K562 (cell line): ENCODE measurements at regions of chr1 and their contacts with region 1.

Region 1: DNA sequence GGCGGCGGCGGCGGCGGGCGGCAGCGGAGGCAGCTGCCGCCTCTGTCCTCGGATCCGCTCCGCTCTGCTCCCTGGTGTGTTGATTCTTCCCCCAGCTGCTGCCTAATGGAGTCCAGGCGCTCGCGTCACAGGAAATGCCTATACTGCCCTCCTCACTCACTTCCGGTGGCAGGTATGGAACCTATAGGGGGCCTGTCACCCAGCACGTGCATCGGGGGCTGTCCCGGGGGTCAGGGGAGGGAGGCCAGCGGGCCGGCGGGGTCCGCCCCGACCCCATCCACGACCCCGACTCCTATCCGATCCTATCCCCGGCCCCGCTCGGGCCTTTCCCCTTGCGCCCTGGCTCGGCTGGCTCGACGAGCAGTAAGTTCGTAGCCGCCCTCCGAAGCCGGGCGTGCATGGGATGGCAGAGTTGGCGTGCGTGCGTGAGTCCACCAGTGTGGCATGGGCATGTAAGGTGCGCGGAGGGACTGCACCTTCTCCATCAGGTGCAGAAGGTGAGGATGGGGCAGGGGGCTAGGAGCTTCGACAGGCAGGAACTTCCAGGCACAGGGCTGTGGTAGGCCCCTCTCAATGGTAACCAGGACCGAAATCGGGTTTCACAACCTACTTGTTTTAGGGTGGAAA is at the start of gene WDR26:
- DNase-seq: peak; percentile 84 to 95 (median 88)
- ATAC-seq: peak; percentile 78
- H3K4me3 ChIP-seq: peak within 1 kb of the TSS; percentile 77
- H3K27ac ChIP-seq: peak within 1 kb of the TSS; percentile 96
- H3K4me1 ChIP-seq: peaks cover 12 to 29% of the 10 kb centered on the region in 2 experiments
- H3K27me3 ChIP-seq: no peaks in the 10 kb centered on the region
- CTCF ChIP-seq: peak; percentile 22 to 35 (median 30); a peak in 3 of 6 replicates
- EP300 ChIP-seq: peak; percentile 39; the same call in 1 of the 2 replicates
- POLR2A ChIP-seq: peak; percentile 86
- RAD21 ChIP-seq: no peak
- polyA plus RNA-seq, gene WDR26: 11.5 to 14.3 TPM

Region 2: GRCh38 chr1:224356685-224357625 is 77.8 kb before region 1 on chr1 and contains the start of gene CNIH4:
- CTCF ChIA-PET with region 1: no interaction called
- POLR2A ChIA-PET with region 1: no interaction called
- in situ Hi-C with region 1: no loop called
- intact Hi-C with region 1: loop called (anchors 1 kb)
- DNase-seq: peak; percentile 94 to 97 (median 96)
- ATAC-seq: peak; percentile 95
- H3K4me3 ChIP-seq: peak within 1 kb of the TSS; percentile 79
- H3K27ac ChIP-seq: peak within 1 kb of the TSS; percentile 46
- H3K4me1 ChIP-seq: peaks cover 12 to 16% of the 10 kb centered on the region in 2 experiments
- H3K27me3 ChIP-seq: no peaks in the 10 kb centered on the region
- CTCF ChIP-seq: no peak; a peak in 1 of 6 replicates
- EP300 ChIP-seq: no peak
- POLR2A ChIP-seq: peak; percentile 84
- RAD21 ChIP-seq: no peak
- polyA plus RNA-seq, gene CNIH4: 237 to 266 TPM

Region 3: GRCh38 chr1:224411766-224412165 is 23.0 kb before region 1 on chr1:
- CTCF ChIA-PET with region 1: no interaction called
- POLR2A ChIA-PET with region 1: interaction called, 45 read pairs
- in situ Hi-C with region 1: no loop called
- intact Hi-C with region 1: no loop called
- DNase-seq: no peak
- ATAC-seq: peak; percentile 25; the same call in 2 of the 3 replicates
- H3K4me3 ChIP-seq: no peak overlapping the region
- H3K27ac ChIP-seq: no peak overlapping the region
- H3K4me1 ChIP-seq: no peaks in the 10 kb centered on the region
- H3K27me3 ChIP-seq: no peaks in the 10 kb centered on the region
- CTCF ChIP-seq: no peak
- EP300 ChIP-seq: no peak
- POLR2A ChIP-seq: no peak
- RAD21 ChIP-seq: no peak

Region 4: DNA sequence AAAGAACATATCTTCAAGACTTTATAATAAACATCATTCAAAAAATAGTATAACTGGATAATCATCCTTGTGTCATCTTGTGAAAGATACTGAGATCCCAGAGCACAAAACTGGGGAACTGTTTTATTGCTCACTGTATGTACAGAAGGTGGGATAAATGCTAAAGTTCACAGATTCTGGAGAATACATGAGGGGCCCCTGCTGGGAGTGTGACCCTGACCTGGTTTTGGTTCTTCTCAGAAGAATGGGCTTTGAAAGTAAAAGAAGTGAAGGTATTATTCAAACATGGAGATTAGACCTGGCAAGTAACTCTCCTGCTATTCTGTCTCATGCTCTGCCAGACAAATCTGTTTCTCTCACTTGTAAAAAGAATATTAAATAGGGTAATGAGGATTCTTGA is 14.7 kb before region 1 on chr1:
- CTCF ChIA-PET with region 1: no interaction called
- POLR2A ChIA-PET with region 1: interaction called, 45 read pairs
- in situ Hi-C with region 1: no loop called
- intact Hi-C with region 1: no loop called
- DNase-seq: no peak
- ATAC-seq: no peak
- H3K4me3 ChIP-seq: no peak overlapping the region
- H3K27ac ChIP-seq: no peak overlapping the region
- H3K4me1 ChIP-seq: no peaks in the 10 kb centered on the region
- H3K27me3 ChIP-seq: no peaks in the 10 kb centered on the region
- CTCF ChIP-seq: no peak
- EP300 ChIP-seq: no peak
- POLR2A ChIP-seq: no peak
- RAD21 ChIP-seq: no peak

Region 5: GRCh38 chr1:224447251-224447650 is 12.4 kb after region 1 on chr1:
- CTCF ChIA-PET with region 1: no interaction called
- POLR2A ChIA-PET with region 1: interaction called, 14 read pairs
- in situ Hi-C with region 1: no loop called
- intact Hi-C with region 1: no loop called
- DNase-seq: no peak
- ATAC-seq: no peak
- H3K4me3 ChIP-seq: no peak overlapping the region
- H3K27ac ChIP-seq: no peak overlapping the region
- H3K4me1 ChIP-seq: no peaks in the 10 kb centered on the region
- H3K27me3 ChIP-seq: no peaks in the 10 kb centered on the region
- CTCF ChIP-seq: no peak
- EP300 ChIP-seq: no peak
- POLR2A ChIP-seq: no peak
- RAD21 ChIP-seq: no peak

Region 6: DNA sequence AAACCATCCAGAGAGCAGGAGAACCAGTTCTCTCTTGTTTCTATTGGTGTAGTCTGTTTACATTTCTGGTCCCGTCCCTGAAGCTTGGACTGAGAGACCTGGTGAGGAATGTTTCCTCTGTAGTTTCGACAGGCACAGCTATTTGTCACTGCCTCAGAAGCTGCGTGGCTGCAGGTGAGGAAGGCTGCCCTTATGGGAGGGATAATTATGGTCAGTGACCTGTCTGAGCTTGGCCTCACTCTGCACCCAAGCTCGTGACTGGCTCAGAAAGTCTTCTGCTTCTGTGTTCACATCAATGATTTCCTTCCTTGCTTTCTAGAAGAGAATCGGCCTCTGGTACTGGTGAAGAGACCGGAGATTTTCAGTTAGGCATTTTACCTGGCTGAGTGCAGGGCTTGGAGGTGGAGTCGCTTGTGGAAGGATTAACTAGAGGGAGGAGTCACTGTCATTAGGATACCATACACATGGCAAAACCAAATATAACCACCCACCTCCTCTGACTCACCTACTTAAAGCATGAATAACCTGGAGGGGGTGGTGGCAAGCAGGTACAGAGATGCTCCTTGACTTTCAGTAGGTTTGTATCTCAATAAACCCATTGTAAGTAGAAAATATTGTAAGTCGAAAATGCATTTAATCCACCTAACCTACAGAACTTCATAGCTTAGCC is 19.7 kb after region 1 on chr1:
- CTCF ChIA-PET with region 1: no interaction called
- POLR2A ChIA-PET with region 1: interaction called, 9 read pairs
- in situ Hi-C with region 1: no loop called
- intact Hi-C with region 1: loop called (anchors 2 kb)
- DNase-seq: peak in 1 of 4 experiments; percentile 2
- ATAC-seq: no peak
- H3K4me3 ChIP-seq: no peak overlapping the region
- H3K27ac ChIP-seq: no peak overlapping the region
- H3K4me1 ChIP-seq: peaks cover 12 to 20% of the 10 kb centered on the region in 2 experiments
- H3K27me3 ChIP-seq: no peaks in the 10 kb centered on the region; a peak in 1 of 5 replicates
- CTCF ChIP-seq: no peak
- EP300 ChIP-seq: no peak
- POLR2A ChIP-seq: no peak
- RAD21 ChIP-seq: no peak

Region 7: DNA sequence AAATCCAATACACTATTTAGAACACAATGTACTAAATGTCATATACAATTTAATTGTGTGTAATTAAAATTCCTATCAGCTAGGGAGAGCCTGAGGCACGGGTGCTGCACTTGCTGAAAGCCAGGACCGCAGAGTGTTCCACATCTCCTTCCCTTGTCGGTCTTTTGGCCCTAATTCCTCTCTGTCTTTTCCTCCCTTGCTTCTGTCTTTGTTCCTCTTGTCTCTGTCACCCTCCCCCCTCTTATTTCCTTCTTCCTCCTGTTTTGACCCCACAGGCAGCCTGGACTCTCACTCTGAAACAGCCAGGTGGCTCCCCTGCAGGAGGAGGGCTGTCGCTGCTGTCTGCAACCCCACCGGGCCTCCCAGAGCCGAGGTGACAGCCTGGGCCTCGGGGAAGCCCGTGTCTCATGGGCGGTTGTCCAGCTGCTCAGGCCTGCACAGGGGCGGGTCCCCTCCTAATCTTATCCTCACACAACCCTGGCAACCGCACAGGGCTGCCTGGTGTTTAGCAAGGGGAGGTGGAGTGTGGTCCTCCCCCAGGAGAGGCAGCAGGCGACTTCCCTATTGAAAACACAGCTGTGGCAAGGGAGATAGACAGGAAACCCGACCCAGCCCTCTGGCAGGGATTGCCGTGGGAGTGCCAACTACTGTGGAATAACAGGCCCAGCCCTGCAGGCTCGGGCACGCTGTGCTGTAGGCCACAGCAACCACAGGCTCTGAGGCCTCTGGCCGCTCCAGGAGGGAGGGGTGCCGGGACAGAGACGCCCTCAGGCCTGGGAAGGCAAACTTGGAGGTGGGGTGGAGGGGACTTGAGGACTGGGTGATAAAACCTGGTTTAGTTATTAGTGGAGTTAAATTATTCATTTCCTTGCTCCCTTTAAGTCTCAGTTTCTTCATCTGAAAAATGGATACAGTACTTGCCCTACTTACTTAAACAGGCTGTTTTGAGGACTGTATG is 68.6 kb after region 1 on chr1:
- CTCF ChIA-PET with region 1: no interaction called
- POLR2A ChIA-PET with region 1: no interaction called
- in situ Hi-C with region 1: no loop called
- intact Hi-C with region 1: loop called (anchors 1 kb)
- DNase-seq: peak; percentile 99 to 100 (median 100)
- ATAC-seq: peak; percentile 97
- H3K4me3 ChIP-seq: peak overlapping the region; percentile 18; the same call in 1 of the 2 replicates
- H3K27ac ChIP-seq: peak overlapping the region; percentile 60
- H3K4me1 ChIP-seq: peaks cover 44 to 45% of the 10 kb centered on the region in 2 experiments
- H3K27me3 ChIP-seq: no peaks in the 10 kb centered on the region
- CTCF ChIP-seq: peak; percentile 66 to 73 (median 68)
- EP300 ChIP-seq: peak; percentile 96
- POLR2A ChIP-seq: 0 out of 2 replicates have a peak, but pooled peaks have one; percentile 35
- RAD21 ChIP-seq: peak; percentile 51 to 72

Region 8: GRCh38 chr1:224548676-224549075 is 113.9 kb after region 1 on chr1:
- CTCF ChIA-PET with region 1: no interaction called
- POLR2A ChIA-PET with region 1: no interaction called
- in situ Hi-C with region 1: no loop called
- intact Hi-C with region 1: no loop called
- DNase-seq: no peak
- ATAC-seq: no peak
- H3K4me3 ChIP-seq: no peak overlapping the region
- H3K27ac ChIP-seq: no peak overlapping the region
- H3K4me1 ChIP-seq: peaks cover 0 to 7% of the 10 kb centered on the region in 2 experiments; a peak in 2 of 5 replicates
- H3K27me3 ChIP-seq: peaks cover 0 to 7% of the 10 kb centered on the region in 2 experiments; a peak in 2 of 5 replicates
- CTCF ChIP-seq: no peak
- EP300 ChIP-seq: no peak
- POLR2A ChIP-seq: no peak
- RAD21 ChIP-seq: no peak